Left ventricle myocardium superior (tissue), 1 donor: ENCODE measurements at regions of chr17 and their contacts with region 1.

Region 1: DNA sequence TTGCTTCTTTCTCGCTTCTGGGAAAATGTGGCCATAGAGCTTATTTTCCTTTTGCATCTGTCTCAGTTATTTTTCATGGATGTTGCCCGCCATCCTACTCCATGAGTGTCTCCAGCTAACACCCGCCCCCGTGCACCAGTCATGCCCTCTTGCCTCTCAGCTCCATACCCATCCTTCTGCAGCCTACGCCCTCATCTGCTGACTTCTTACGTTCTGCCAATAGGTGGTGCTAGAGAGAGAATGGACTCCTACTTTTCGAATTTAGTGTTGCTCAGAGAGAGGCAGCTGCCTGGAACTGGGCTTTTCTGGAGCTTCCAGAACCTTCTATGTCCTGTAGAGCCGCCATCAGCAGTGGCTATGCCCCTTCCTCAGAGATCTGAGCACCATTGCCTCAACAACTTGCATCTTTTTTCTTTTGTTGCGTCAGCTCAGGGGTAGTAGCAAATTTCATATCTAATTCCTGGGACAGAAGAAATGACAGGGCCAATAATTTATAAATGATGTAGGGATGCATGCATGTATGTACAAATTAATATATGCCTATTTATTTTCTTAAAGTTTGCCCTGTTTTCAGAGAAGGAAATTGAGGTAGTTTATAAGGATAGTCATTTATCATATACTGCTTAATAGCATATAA is 119.7 kb upstream of the MYOCD start:
- DNase-seq: no peak
- ATAC-seq: peak; percentile 85

Region 2: GRCh38 chr17:12431188-12431587 is 114.8 kb before region 1 on chr17:
- intact Hi-C with region 1: no loop called
- DNase-seq: no peak
- ATAC-seq: no peak

Region 3: GRCh38 chr17:12485361-12485906 is 60.6 kb before region 1 on chr17:
- intact Hi-C with region 1: loop called (anchors 10 kb)
- DNase-seq: no peak
- ATAC-seq: no peak

Region 4: DNA sequence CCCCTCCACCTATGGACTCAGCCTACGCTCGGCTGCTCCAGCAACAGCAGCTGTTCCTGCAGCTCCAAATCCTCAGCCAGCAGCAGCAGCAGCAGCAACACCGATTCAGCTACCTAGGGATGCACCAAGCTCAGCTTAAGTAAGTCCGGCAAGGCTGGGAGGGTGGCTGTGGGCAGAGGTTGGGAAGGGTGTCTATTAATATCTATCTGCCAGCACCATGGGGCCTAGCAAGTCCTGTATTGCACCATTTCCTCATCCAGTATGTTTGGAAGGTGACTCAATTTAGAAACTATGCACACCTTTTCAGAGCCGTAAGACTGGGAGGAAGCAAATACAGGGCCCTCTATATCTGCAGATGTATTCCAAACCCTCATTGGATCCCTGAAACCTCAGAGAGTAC is 198.3 kb after region 1 on chr17:
- intact Hi-C with region 1: loop called (anchors 10 kb)
- DNase-seq: peak; percentile 68
- ATAC-seq: peak; percentile 94

Region 5: DNA sequence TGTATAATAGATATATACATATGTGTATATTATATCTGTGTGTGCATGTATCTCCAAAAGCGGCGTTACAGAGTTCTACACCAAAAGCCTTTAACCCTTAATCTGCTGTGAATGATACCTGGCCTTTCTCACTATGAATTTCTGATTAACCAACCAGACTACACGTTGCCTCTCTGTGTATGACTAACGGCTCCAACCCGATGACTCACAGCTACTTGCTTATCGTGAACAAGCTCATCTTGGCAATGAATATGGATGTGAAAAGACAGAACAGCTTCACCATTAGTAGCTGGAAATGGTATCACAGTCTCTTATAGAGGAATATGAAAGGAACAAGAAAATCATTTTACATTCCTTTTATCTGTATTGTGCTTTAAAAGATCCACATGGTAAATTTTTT is 219.6 kb after region 1 on chr17:
- intact Hi-C with region 1: no loop called
- DNase-seq: no peak
- ATAC-seq: peak; percentile 87